WTC11 (cell line): ENCODE measurements at regions of chr14 and their contacts with region 1.

Region 1: GRCh38 chr14:91323671-91324605 is 79.4 kb upstream of the GPR68 start:
- DNase-seq: peak; percentile 90
- ATAC-seq: peak; percentile 81
- H3K4me3 Mint-ChIP-seq: no peak overlapping the region
- H3K27ac Mint-ChIP-seq: 0 out of 2 replicates have a peak overlapping the region, but pooled peaks have one; percentile 18
- H3K4me1 Mint-ChIP-seq: peaks cover 9% of the 10 kb centered on the region
- H3K27me3 Mint-ChIP-seq: no peaks in the 10 kb centered on the region
- CTCF ChIP-seq: peak; percentile 98

Region 2: GRCh38 chr14:91341751-91342154 is 17.8 kb after region 1 on chr14:
- CTCF ChIA-PET with region 1: interaction called, 21 read pairs
- POLR2A ChIA-PET with region 1: no interaction called
- DNase-seq: no peak
- ATAC-seq: no peak
- H3K4me3 Mint-ChIP-seq: no peak overlapping the region
- H3K27ac Mint-ChIP-seq: no peak overlapping the region
- H3K4me1 Mint-ChIP-seq: peaks cover 5% of the 10 kb centered on the region; the same call in 1 of the 2 replicates
- H3K27me3 Mint-ChIP-seq: no peaks in the 10 kb centered on the region
- CTCF ChIP-seq: no peak

Region 3: DNA sequence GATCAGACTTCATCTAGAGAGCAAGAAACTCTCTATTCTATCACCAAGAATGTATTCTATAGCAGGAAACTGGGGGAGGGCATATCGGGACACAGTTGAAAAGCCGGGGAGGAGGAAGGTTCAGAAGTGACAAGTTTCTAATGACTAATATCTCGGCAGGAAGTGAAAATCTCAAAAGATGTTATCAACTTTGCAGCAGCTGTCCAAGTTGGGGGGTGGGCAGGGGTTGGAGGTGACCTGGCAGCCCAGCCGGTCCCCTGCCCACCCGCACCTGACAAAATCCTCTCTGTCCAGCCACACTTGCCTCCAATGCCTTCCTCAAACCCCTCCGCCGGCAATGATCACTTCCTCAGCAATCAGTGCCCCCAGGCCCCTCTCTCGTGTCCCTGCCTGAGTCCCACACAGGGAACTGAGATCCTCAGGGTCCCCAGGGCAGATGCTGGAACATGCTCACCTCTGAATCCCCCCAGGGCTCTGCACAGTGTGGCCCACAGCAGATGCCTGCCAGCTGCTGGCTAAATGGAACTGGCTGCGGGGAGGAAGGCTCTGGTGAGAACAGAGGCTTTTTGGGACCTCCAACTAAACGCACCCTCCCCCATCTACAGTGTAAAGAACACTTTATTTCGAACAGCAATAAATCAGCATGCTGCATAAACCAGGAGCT is 49.8 kb after region 1 on chr14:
- CTCF ChIA-PET with region 1: interaction called, 13 read pairs
- POLR2A ChIA-PET with region 1: interaction called, 3 read pairs
- DNase-seq: no peak
- ATAC-seq: no peak
- H3K4me3 Mint-ChIP-seq: no peak overlapping the region
- H3K27ac Mint-ChIP-seq: peak overlapping the region; percentile 71
- H3K4me1 Mint-ChIP-seq: peaks cover 87% of the 10 kb centered on the region
- H3K27me3 Mint-ChIP-seq: no peaks in the 10 kb centered on the region
- CTCF ChIP-seq: no peak

Region 4: DNA sequence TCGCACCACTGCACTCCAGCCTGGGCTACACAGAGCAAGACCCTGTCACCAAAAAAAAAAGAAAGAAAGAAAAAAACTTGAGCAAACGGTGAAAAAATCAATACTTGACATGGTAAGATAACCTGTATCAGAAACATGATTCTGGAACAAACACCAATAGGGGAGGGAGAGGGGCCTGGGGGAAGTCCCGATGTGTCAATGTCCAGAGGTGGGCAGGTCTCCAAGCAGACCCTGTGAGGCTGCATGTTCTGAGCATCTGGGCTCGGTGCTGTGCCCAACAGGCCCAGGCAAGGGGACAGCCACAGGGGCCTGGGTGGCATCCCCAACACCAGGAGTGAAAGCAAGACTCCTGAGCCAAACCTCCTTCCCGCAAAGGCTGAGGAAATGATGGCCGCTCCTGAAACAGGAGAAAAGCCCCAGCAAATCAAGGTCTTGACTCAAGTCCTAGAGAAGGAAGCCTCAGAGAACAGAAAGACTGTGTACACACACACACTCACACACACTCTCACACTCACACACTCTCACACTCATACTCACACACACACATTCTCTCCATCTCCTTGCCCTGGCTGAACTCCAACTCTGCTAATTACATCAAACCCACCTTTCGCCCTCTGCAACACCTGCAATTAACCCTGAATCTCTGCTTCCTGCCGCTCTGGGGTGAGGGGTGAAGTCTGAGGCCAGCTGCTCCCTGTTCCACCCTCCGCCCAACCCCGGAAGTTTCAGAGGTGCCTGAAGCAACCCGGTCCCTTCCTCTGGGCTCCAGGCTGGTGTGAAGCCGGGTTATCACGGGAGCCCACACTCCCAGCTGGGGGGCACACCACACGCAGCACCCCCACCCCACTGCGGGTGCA is 73.2 kb after region 1 on chr14:
- CTCF ChIA-PET with region 1: interaction called, 24 read pairs
- POLR2A ChIA-PET with region 1: no interaction called
- DNase-seq: peak; percentile 51
- ATAC-seq: peak; percentile 56
- H3K4me3 Mint-ChIP-seq: peak overlapping the region; percentile 2; the same call in 1 of the 2 replicates
- H3K27ac Mint-ChIP-seq: peak overlapping the region; percentile 97
- H3K4me1 Mint-ChIP-seq: peaks cover 85% of the 10 kb centered on the region
- H3K27me3 Mint-ChIP-seq: no peaks in the 10 kb centered on the region
- CTCF ChIP-seq: no peak

Region 5: DNA sequence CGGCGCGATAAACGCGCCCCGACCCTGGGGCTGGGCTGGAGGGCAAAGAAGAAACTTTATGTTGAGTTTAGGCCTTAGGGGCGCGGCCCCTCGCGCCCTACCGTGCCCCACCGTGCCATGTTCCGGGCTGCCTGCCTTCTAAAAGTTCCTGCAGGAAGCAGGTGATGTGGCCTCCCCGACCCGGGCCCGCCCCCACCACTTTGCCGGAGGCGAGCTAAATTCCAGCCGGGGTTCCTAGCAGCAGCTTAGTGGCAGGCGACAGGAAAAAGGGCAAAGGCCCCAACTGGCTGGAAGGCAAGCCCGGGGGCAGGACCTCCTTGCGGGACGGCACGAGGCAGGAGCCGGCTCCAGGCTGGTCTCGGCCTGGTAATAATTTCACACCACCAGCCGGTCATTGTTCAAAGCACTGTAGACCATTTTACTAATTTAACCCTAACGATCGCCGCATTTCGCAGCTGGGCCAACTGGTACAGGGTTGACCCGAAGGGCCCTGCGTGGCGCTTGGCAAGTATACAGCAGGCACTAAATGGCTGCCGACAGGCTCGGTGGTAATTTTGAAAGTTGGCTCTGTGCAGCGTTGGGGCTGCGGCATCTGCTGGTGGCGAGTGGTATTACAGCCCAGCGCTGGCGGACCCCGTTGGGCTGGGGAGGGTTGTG is 94.6 kb after region 1 on chr14:
- CTCF ChIA-PET with region 1: interaction called, 35 read pairs
- POLR2A ChIA-PET with region 1: no interaction called
- DNase-seq: peak; percentile 83
- ATAC-seq: peak; percentile 23
- H3K4me3 Mint-ChIP-seq: peak overlapping the region; percentile 53
- H3K27ac Mint-ChIP-seq: no peak overlapping the region
- H3K4me1 Mint-ChIP-seq: peaks cover 35% of the 10 kb centered on the region
- H3K27me3 Mint-ChIP-seq: no peaks in the 10 kb centered on the region; the same call in 1 of the 2 replicates
- CTCF ChIP-seq: peak; percentile 98

Region 6: DNA sequence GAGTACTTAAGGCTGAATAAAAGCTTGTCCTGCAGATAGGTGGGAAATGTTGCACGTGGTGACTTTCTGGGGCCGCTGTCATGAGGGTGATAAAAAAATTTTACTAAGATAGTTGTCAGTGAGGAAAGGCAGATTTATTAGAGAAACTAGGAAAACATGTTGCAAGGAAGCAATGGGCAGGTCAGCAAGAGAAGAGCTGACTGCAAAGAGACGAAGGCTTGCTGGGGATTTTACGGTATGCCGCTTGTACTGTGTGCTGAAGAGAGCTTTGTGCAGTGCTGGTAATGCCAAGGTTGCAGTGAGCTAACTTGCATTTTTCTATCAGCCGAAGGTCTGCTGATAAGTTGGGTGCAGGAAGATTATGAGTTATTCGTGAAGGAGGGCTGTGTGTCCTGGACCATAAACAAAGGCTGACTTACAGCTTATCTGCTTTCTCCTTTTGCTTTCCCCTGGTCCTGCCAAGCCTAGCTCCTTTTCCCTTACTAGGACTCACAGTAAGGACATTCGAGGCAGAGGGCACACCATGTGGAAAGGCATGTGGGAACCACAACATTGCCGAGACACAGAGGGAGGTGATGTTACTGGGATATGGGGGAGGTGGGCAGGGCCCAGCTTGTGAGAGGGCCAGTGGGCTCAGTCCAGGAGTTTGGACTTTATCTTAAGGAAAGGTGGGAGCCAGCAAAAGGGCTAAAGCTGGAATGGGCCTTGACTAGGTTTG is 101.0 kb after region 1 on chr14:
- CTCF ChIA-PET with region 1: interaction called, 15 read pairs
- POLR2A ChIA-PET with region 1: no interaction called
- DNase-seq: no peak
- ATAC-seq: no peak
- H3K4me3 Mint-ChIP-seq: no peak overlapping the region
- H3K27ac Mint-ChIP-seq: no peak overlapping the region
- H3K4me1 Mint-ChIP-seq: no peaks in the 10 kb centered on the region
- H3K27me3 Mint-ChIP-seq: peaks cover 7% of the 10 kb centered on the region
- CTCF ChIP-seq: no peak

Region 7: DNA sequence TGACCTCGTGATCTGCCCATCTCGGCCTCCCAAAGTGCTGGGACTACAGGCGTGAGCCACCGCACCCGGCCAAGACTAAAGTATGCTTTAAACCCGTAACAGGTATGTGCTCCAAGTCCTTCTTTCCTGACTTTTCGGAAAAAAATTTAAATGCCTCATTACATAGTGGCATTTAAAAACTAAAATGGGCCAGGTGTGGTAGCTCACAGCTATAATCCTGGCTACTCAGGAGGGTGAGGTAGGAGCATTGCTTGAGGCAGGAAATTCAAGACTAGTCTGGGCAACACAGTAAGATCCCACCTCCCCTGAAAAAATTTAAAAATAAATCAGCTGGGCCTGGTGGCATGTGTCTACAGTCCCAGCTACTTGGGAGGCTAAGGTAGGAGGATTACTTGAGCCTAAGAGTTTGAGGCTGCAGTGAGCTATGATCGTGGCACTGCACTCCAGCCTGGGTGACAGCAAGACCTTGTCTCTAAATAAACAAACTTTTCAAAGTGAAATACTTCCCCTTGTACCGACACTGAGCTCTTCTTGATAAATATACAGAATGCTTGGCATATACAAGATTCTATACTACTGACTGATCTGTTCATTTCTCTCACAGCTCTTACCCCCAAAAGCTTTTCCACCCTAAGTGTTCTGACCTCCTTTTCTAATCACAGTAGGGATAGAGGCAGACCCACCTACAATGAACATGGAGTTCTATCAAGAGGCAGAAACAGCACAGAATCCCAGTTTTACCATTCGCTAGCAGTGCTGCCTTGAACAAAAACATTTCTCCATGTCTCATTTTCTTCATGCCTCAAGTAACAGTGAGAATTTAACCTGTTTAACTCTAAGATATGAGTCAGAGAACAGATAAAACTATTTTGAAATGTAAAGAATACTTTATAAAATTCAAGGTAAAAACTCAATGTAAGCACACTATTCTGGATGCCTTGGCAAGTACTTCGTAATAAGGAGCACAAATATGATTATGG is 178.3 kb after region 1 on chr14:
- CTCF ChIA-PET with region 1: no interaction called
- POLR2A ChIA-PET with region 1: no interaction called
- DNase-seq: no peak
- ATAC-seq: no peak
- H3K4me3 Mint-ChIP-seq: no peak overlapping the region
- H3K27ac Mint-ChIP-seq: no peak overlapping the region
- H3K4me1 Mint-ChIP-seq: peaks cover 18% of the 10 kb centered on the region
- H3K27me3 Mint-ChIP-seq: no peaks in the 10 kb centered on the region
- CTCF ChIP-seq: no peak